ENCODE measurements at regions of chr10 and their contacts with region 1.

Region 1: GRCh38 chr10:72567884-72568640 is 57.8 kb downstream of the MICU1 start:
- DNase-seq: peak; percentile 7
- H3K4me3 ChIP-seq: no peak overlapping the region
- H3K27ac ChIP-seq: no peak overlapping the region
- H3K4me1 ChIP-seq: no peaks in the 10 kb centered on the region
- H3K27me3 ChIP-seq: no peaks in the 10 kb centered on the region
- CTCF ChIP-seq: peak in 1 of 2 donors; percentile 39
- POLR2A ChIP-seq: no peak

Region 2: GRCh38 chr10:72483471-72483870 is 84.6 kb before region 1 on chr10:
- CTCF ChIA-PET with region 1: no interaction called
- POLR2A ChIA-PET with region 1: no interaction called
- dilution Hi-C with region 1: no loop called
- intact Hi-C with region 1: no loop called
- DNase-seq: no peak
- H3K4me3 ChIP-seq: no peak overlapping the region
- H3K27ac ChIP-seq: no peak overlapping the region
- H3K4me1 ChIP-seq: no peaks in the 10 kb centered on the region
- H3K27me3 ChIP-seq: no peaks in the 10 kb centered on the region
- CTCF ChIP-seq: no peak
- POLR2A ChIP-seq: no peak

Region 3: DNA sequence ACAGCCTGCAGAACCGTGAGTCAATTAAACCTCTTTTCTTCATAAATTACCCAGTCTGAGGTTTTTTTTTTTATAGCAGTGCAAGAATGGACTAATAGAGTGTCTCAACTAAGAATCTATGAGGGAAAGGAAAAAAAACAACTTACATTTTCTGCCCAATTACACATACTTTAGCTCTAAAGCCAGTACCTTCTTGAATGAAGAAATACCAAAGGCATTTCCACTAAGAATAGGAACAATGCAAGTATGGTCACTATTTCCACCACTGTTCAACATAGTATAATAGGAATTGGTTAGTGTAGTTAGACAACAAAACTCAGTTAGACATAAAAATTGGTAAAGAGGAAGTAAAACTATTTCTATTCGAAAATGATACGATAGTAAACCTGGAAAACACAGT is 20.2 kb after region 1 on chr10:
- CTCF ChIA-PET with region 1: interaction called, 10 read pairs
- POLR2A ChIA-PET with region 1: no interaction called
- dilution Hi-C with region 1: no loop called
- intact Hi-C with region 1: no loop called
- DNase-seq: no peak
- H3K4me3 ChIP-seq: no peak overlapping the region
- H3K27ac ChIP-seq: no peak overlapping the region
- H3K4me1 ChIP-seq: no peaks in the 10 kb centered on the region
- H3K27me3 ChIP-seq: no peaks in the 10 kb centered on the region
- CTCF ChIP-seq: no peak
- POLR2A ChIP-seq: no peak